PC-3 (cell line): ENCODE measurements at regions of chr18 and their contacts with region 1.

Region 1: GRCh38 chr18:80147418-80148325 is 38.6 kb downstream of the ADNP2 start:
- DNase-seq: peak; percentile 66
- ATAC-seq: peak; percentile 80
- H3K4me3 ChIP-seq: peak overlapping the region; percentile 83
- H3K27ac ChIP-seq: no peak overlapping the region
- H3K4me1 ChIP-seq: no peaks in the 10 kb centered on the region
- H3K27me3 ChIP-seq: no peaks in the 10 kb centered on the region
- CTCF ChIP-seq: no peak

Region 2: DNA sequence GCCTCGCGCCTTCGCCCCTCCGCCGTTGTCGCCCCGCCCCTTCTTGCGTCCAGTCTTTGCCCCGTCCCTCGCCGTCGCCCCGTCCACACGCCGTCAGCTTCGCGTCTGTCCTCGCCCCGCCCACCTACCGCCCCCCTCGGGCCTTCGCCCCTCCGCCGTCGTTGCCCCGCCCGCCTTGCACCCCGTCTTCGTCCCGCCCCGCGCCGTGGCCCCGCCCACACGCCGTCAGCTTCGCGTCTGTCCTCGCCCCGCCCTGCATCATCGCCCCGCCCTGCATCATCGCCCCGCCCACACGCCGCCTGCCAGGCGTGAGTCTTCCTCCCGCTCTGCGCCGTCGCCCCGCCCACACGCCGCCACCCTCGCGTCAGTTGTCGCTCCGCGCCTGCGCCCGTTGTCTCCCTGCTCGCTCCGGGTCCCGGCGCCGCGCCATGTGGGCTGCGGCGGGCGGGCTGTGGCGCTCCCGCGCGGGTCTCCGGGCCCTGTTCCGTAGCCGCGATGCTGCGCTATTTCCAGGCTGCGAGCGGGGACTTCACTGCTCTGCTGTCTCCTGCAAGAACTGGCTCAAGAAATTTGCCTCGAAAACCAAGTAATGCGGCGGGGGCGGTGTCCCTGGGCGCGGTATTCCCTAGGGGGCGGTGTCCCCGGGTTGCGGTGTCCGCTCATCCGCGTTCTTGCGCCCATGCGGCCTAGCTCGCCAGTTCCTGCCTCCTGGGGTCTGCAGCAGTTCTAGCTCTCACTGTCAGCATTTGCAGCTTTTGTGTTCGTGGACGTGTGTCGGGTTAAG is 113.4 kb before region 1 on chr18 and contains the start of gene RBFA:
- CTCF ChIA-PET with region 1: no interaction called
- POLR2A ChIA-PET with region 1: no interaction called
- intact Hi-C with region 1: loop called (anchors 2 kb)
- DNase-seq: peak; percentile 95
- ATAC-seq: peak; percentile 76
- H3K4me3 ChIP-seq: peak within 1 kb of the TSS; percentile 97
- H3K27ac ChIP-seq: peak within 1 kb of the TSS; percentile 78
- H3K4me1 ChIP-seq: peaks cover 14% of the 10 kb centered on the region; the same call in 1 of the 2 replicates
- H3K27me3 ChIP-seq: no peaks in the 10 kb centered on the region
- CTCF ChIP-seq: peak; percentile 56; the same call in 1 of the 2 replicates
- total RNA-seq, gene RBFA: 38.9 and 50.7 TPM in 2 replicates

Region 3: DNA sequence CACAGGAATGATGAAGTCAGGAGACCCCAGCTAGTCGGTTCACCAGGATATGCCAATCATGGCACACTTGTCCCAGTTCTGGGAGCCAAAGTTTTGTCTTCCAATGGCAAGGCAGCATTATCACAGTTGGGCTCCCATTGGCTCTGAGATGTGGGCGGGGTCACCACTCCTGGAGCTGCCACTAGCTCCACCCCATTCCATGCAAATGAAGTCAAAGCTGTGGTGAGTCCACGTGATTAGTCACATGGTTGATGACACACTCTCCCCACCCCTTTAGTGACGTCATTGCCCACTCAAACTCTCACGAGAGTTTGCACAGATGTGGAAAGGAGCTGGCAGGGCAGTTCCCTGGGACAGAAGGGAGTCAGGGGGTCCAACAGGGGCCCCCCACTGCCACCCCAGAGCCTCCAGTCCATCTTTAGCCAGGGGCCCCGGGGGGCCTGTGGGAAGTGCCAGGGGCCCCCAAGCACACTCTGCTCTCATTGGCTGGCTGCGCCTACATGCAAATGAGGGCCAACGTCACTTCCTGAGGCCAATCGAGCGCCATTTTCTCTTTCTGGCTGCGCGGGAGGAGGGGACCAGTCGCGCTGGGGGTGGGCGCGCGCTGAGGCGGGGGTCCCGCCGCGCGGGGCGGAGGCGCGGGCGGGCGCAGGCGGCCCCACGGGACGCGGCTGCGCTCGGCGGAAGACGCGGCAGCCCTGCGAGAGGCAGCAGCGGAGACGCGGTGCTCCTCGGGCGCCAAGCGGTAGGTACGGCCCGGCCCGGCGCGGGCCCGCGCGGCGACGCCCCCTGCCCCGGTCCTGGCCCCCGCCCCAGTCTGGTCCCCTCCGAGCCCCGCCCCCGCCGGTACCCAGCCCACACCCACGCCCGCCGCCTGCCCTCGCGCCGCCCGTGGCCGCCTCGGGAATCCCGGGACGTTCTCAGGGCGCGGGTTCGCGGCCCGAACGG is 38.7 kb before region 1 on chr18 and contains the start of gene ADNP2:
- CTCF ChIA-PET with region 1: no interaction called
- POLR2A ChIA-PET with region 1: no interaction called
- intact Hi-C with region 1: loop called (anchors 5 kb)
- DNase-seq: peak; percentile 97
- ATAC-seq: peak; percentile 83
- H3K4me3 ChIP-seq: peak within 1 kb of the TSS; percentile 87
- H3K27ac ChIP-seq: peak within 1 kb of the TSS; percentile 77
- H3K4me1 ChIP-seq: peaks cover 10% of the 10 kb centered on the region; the same call in 1 of the 2 replicates
- H3K27me3 ChIP-seq: no peaks in the 10 kb centered on the region
- CTCF ChIP-seq: no peak
- total RNA-seq, gene ADNP2: 23.2 and 25.2 TPM in 2 replicates

Region 4: DNA sequence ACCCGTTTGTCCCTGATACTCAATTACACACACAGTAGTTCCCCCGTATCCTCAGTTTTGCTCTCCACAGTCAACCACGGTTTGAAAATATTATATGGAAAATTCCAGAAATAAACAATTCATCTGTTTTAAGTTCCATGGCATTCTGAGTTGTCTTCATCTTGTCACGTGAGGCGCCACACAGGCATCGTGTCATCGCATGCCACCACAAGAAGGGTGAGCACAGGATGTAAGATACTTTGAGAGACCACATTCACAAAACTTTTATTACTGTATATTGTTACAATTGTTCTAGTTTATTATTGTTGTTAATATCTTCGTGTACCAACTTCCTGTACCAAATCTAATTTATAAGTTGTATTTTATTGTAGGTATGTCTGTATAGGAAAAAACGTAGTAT is 20.9 kb before region 1 on chr18:
- CTCF ChIA-PET with region 1: no interaction called
- POLR2A ChIA-PET with region 1: interaction called, 24 read pairs
- intact Hi-C with region 1: no loop called
- DNase-seq: no peak
- ATAC-seq: no peak
- H3K4me3 ChIP-seq: no peak overlapping the region
- H3K27ac ChIP-seq: no peak overlapping the region
- H3K4me1 ChIP-seq: peaks cover 5% of the 10 kb centered on the region
- H3K27me3 ChIP-seq: no peaks in the 10 kb centered on the region
- CTCF ChIP-seq: no peak

Region 5: GRCh38 chr18:80247403-80247916 is 99.8 kb after region 1 on chr18 and contains the start of gene PARD6G:
- CTCF ChIA-PET with region 1: no interaction called
- POLR2A ChIA-PET with region 1: no interaction called
- intact Hi-C with region 1: no loop called
- DNase-seq: peak; percentile 63
- ATAC-seq: peak; percentile 83
- H3K4me3 ChIP-seq: peak within 1 kb of the TSS; percentile 90
- H3K27ac ChIP-seq: no peak within 1 kb of the TSS
- H3K4me1 ChIP-seq: peaks cover 7% of the 10 kb centered on the region
- H3K27me3 ChIP-seq: no peaks in the 10 kb centered on the region
- CTCF ChIP-seq: no peak
- total RNA-seq, gene PARD6G: 5.1 and 5.4 TPM in 2 replicates